ENCODE measurements at regions of chr17 and their contacts with region 1.

Region 1: DNA sequence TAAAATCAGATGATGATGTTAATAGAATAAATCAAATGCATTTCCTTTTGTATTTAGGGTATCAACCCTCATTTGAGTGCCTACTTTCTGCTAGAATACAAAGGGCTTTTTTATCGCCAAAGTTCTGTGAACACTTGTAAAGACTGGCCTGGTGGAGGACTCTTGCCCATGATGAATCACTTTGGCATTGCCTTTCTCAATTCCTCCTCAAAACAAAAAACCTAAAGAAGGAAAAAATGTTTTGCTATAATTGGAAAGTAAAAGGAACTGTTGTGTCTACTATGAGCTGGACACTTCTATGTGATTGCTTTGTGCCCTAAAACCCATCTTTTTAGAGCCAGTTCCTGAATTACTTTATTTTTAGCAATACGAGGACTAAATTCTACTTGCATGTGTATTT is 13.0 kb upstream of the DHRS11 start:
- DNase-seq: no peak
- ATAC-seq: no peak
- H3K4me3 ChIP-seq: no peak overlapping the region
- H3K27ac ChIP-seq: no peak overlapping the region
- H3K4me1 ChIP-seq: peaks cover 0 to 11% (median 3%) of the 10 kb centered on the region in 9 donors
- H3K27me3 ChIP-seq: no peaks in the 10 kb centered on the region
- CTCF ChIP-seq: no peak

Region 2: DNA sequence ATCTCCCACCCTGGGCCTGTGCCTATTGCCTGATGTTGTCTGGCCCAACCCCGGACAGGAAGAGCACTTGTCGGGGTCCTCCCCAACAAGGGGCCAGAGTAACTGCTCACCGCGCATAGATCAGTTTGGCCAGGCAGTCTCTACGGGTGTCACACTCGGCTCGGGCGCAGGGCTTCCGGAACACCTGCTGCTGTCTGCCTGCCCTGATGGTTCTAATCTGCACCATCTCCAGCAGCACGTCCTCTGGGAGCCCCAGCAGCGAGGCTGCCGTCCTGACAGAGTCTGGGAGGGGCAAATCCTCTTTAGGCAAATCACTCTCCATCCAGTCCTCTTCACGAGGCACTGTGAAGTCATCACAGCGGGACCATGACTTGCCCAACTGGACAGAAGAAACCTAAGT is 68.0 kb before region 1 on chr17:
- intact Hi-C with region 1: loop called in 1 of 10 experiments (anchors 10 kb)
- DNase-seq: no peak
- ATAC-seq: no peak
- H3K4me3 ChIP-seq: no peak overlapping the region
- H3K27ac ChIP-seq: no peak overlapping the region
- H3K4me1 ChIP-seq: no peaks in the 10 kb centered on the region
- H3K27me3 ChIP-seq: no peaks in the 10 kb centered on the region
- CTCF ChIP-seq: no peak

Region 3: GRCh38 chr17:36657763-36658490 is 79.3 kb after region 1 on chr17:
- intact Hi-C with region 1: no loop called
- DNase-seq: no peak
- ATAC-seq: peak in 5 of 8 donors; percentile 14 to 46 (median 37)
- H3K4me3 ChIP-seq: peak overlapping the region; percentile 21 to 59 (median 50)
- H3K27ac ChIP-seq: no peak overlapping the region
- H3K4me1 ChIP-seq: peaks cover 0 to 9% (median 5%) of the 10 kb centered on the region in 9 donors
- H3K27me3 ChIP-seq: peaks cover 5 to 92% (median 82%) of the 10 kb centered on the region in 7 donors
- CTCF ChIP-seq: peak in 4 of 9 donors; percentile 15 to 29 (median 23)

Measured in heart right ventricle (tissue), 16 donors.